ENCODE measurements at regions of chr21 and their contacts with region 1.

Region 1: DNA sequence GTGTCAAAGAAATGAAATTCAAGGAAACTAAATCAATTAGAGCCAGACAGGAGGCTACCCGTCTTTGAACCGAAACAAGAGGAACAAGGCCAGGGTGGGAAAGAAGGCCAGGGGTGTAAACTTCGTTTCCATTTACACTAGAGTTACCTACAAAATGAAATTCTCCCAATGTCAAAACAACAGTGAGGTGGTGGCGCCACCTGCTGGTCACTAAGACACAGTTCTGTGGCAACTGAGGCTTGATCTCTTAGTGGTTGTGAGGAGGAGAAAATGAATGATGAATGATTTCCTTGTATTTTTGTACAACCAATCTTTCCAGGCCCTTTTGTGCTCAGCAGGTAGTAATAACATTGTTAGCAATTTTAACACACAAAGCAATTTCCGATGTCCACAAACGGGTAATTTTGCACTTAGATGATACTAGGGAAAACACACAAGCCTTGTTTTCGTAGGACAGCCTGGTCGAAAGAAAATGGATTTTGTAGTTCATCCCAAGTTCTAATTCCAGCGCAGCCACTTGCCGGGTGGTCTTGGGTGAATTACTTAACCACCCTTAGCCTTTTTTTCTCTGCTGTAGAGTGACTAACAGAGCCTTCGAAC is 54.8 kb upstream of the SOD1 start:
- DNase-seq: no peak
- H3K4me3 ChIP-seq: no peak overlapping the region
- CTCF ChIP-seq: peak; percentile 82

Region 2: DNA sequence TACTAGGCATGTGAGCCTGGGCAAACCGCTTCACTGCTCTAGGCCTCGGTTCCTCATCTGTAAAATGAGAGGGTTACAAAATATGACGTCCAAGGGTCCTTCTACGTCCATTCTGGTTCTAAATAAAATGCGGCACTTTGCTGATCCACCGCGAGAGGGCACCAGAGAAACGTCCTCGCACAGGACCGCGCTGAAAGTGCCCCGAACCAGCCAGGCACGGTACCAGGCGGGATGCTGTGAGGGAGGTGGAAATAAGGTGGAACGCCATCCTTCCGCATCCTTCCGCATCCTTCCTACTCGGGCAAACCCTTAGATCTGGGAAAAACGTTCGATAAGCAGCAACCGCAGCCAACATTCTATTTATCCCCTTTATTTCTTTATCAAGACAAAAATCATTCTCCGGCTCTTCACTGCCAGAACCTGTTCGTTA is 506.1 kb before region 1 on chr21:
- CTCF ChIA-PET with region 1: interaction called, 43 read pairs
- POLR2A ChIA-PET with region 1: no interaction called
- DNase-seq: no peak
- H3K4me3 ChIP-seq: no peak overlapping the region
- CTCF ChIP-seq: peak; percentile 90

Region 3: GRCh38 chr21:31180256-31181081 is 424.2 kb before region 1 on chr21:
- CTCF ChIA-PET with region 1: interaction called, 11 read pairs
- POLR2A ChIA-PET with region 1: no interaction called
- DNase-seq: no peak
- H3K4me3 ChIP-seq: no peak overlapping the region
- CTCF ChIP-seq: peak; percentile 46

Region 4: DNA sequence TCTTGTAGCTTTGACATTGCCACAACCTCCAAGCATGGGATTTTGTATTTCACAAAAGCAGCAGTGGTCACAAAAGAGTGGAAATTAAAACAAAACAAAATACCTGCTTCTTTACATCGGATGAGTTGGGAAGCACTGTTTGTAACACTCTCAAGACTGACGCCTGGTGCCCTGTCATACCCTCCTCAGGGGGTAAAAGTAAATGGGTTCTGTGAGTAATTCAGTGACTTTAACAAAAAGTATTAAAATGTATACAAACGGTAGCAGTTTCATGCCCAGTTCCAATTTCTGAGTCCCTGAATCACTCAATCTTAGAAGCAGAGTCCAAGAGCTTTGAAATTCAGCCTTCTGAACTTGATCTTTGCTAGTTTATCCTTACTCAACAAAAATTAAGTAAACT is 413.1 kb before region 1 on chr21:
- CTCF ChIA-PET with region 1: interaction called, 150 read pairs
- POLR2A ChIA-PET with region 1: no interaction called
- DNase-seq: no peak
- H3K4me3 ChIP-seq: no peak overlapping the region
- CTCF ChIP-seq: no peak

Region 5: DNA sequence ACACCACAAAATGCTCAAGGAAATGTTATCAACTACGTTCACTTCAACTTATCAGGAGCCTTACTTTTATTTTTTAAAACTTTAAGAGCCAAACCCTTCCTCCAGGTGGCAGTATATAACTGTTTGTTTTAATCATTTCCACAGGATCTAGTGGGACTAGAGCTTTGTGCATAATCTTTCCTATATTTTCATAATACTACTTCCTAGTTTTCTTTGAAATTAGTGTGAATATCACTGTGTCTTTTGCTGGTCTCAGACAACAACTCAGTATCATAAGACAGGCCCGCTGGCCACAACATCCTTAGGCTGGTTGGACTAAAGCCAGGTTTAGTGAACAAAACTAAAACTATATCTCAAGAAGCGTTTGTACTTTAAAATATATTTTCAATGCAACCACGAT is 406.1 kb before region 1 on chr21:
- CTCF ChIA-PET with region 1: interaction called, 150 read pairs
- POLR2A ChIA-PET with region 1: no interaction called
- DNase-seq: peak; percentile 10
- H3K4me3 ChIP-seq: no peak overlapping the region
- CTCF ChIP-seq: peak; percentile 25

Region 6: DNA sequence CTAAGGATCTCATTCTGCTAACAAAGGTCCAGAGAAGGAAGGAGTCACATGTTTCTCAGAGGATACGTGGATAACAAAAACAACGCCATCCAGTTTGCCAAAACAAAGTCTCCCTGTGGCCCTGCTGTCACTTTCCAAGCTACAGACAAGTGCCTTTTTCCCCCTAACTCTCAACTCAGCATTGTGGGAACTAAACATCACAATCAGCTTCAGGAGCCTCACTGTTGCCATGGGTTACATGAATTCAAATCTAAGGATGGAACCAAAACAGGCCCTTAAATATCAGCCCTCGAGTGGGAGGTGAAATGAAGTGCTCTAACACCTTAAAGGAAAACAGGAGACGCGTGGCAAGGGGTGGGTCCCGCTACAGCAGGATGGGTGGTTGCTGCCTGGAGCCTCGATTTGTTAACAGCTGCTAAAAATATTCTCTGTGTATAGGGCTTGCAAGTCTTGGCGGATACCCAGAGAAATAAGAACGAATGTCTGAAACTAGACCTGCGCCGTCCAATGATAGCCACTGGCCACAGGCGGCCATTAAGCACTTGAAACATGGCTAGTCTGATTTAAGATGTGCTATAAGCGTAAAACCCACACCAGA is 11.6 kb before region 1 on chr21:
- CTCF ChIA-PET with region 1: interaction called, 15 read pairs
- POLR2A ChIA-PET with region 1: interaction called, 3 read pairs
- DNase-seq: no peak
- H3K4me3 ChIP-seq: no peak overlapping the region
- CTCF ChIP-seq: no peak

Measured in AG04449 (cell line).